Caco-2 (cell line): ENCODE measurements at regions of chr7 and their contacts with region 1.

Region 1: DNA sequence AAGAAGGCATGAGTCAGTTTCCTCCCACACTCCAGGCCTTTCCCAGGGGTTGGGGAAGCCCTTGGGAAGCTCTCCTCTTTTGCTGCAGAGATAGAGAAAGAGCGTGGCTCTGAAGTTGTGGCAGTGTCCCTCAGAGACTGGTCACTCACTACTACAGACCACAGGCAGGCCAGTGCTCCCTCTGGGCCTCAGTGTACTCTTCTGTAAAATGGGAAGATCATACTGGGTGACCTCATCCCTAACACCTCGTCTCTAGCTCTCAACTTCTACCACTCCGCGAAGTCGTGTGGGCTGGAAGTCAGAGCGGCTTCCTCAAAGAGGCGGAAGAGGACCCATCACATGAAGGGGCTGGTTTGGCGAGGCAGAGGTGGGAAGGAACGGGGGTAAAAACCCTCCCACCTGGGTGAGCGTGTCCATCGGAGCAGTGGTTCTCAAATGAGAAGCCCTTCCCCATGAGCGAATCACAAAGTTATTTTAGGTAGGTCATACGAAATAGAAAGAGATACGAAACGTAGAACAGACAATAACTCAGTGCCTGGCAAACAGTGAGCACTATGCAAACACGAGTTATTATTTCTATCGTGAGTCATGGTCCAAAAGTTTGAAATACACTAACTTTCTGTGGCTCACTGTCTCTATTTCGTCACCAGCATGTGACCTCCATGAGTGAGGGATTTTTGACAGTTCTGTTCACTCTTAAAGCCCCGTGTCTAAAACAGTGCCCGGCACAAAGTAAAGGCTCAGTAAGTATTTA is 32.7 kb downstream of the PRKAG2 start:
- DNase-seq: peak in 1 of 2 experiments; percentile 48
- H3K4me3 ChIP-seq: no peak overlapping the region
- H3K4me3 Mint-ChIP-seq: no peak overlapping the region
- H3K27ac Mint-ChIP-seq: peak overlapping the region; percentile 39
- H3K4me1 ChIP-seq: peaks cover 19% of the 10 kb centered on the region
- H3K4me1 Mint-ChIP-seq: no peaks in the 10 kb centered on the region
- H3K27me3 ChIP-seq: no peaks in the 10 kb centered on the region
- H3K27me3 Mint-ChIP-seq: no peaks in the 10 kb centered on the region
- CTCF ChIP-seq: no peak

Region 2: GRCh38 chr7:151818674-151819537 is 25.3 kb before region 1 on chr7:
- CTCF ChIA-PET with region 1: no interaction called
- POLR2A ChIA-PET with region 1: no interaction called
- intact Hi-C with region 1: loop called (anchors 1 kb)
- DNase-seq: peak; percentile 77 to 85
- H3K4me3 ChIP-seq: no peak overlapping the region
- H3K4me3 Mint-ChIP-seq: peak overlapping the region; percentile 22
- H3K27ac Mint-ChIP-seq: no peak overlapping the region
- H3K4me1 ChIP-seq: peaks cover 24% of the 10 kb centered on the region
- H3K4me1 Mint-ChIP-seq: peaks cover 12% of the 10 kb centered on the region
- H3K27me3 ChIP-seq: no peaks in the 10 kb centered on the region
- H3K27me3 Mint-ChIP-seq: no peaks in the 10 kb centered on the region
- CTCF ChIP-seq: no peak

Region 3: DNA sequence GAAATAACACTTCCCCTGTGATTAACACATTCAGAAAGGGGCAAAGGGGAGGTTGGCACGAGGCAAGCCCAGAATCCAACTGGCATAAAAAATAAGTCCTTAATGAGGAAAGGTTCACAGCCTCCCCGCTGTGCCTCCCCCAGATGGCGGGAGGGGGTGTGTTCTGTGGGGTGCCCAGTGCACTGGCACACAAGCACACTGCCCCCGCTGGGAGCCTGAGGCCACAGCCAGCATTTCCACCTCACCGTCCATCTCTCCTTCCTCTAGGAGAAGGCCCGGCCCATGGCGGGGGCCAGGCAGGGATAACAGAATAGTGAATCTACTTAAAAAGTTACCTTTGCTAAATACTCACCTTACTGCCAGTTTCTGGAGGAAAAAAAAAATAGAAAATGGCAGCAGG is 10.6 kb before region 1 on chr7:
- CTCF ChIA-PET with region 1: no interaction called
- POLR2A ChIA-PET with region 1: no interaction called
- intact Hi-C with region 1: no loop called
- DNase-seq: no peak
- H3K4me3 ChIP-seq: no peak overlapping the region
- H3K4me3 Mint-ChIP-seq: no peak overlapping the region
- H3K27ac Mint-ChIP-seq: no peak overlapping the region
- H3K4me1 ChIP-seq: no peaks in the 10 kb centered on the region
- H3K4me1 Mint-ChIP-seq: no peaks in the 10 kb centered on the region
- H3K27me3 ChIP-seq: no peaks in the 10 kb centered on the region
- H3K27me3 Mint-ChIP-seq: no peaks in the 10 kb centered on the region
- CTCF ChIP-seq: no peak